CD8-positive, alpha-beta T cell (primary cell): ENCODE measurements at regions of chr12 and their contacts with region 1.

Region 1: DNA sequence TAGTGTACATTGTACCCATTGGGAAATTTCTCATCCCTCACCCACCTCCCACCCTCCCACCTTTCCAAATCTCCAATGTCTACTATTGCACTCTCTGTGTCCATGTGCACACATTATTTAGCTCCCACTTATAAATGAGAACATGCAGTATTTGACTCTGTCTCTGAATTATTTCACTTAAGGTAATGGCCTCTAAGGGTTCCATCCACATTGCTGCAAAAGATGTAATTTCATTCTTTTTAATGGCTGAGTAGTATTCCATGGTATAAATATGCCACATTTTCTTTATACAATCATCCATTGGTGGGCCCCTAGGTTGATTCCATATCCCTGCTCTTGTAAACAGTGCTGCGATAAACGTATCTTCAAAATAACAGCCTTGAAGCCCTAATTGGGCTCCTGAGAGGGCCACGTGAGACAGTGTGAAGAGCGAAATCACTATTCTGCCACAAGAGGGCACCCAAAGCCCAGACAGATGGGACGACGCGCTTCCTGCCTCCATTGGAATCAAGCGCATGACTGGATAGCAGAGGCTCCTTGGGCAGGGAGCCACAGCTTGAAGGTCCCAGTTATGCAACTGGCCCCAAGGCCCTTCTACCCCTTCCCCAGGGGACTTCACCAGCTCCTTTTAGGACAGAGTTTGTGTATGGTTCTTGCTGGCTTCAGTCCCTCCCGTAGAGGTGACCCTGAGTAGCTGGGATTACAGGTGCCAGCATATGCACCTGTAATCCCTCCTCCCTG is 21.3 kb upstream of the CD27 start:
- DNase-seq: peak; percentile 53 to 94 (median 74)
- ATAC-seq: peak; percentile 63
- H3K4me3 ChIP-seq: no peak overlapping the region
- H3K4me3 Mint-ChIP-seq: no peak overlapping the region
- H3K27ac ChIP-seq: peak overlapping the region in 1 of 2 experiments; percentile 37
- H3K27ac Mint-ChIP-seq: peak overlapping the region; percentile 65
- H3K4me1 ChIP-seq: peaks cover 40% of the 10 kb centered on the region
- H3K4me1 Mint-ChIP-seq: peaks cover 41% of the 10 kb centered on the region
- H3K27me3 ChIP-seq: no peaks in the 10 kb centered on the region
- H3K27me3 Mint-ChIP-seq: no peaks in the 10 kb centered on the region
- CTCF ChIP-seq: peak; percentile 74

Region 2: GRCh38 chr12:6167327-6168259 is 255.8 kb before region 1 on chr12:
- CTCF ChIA-PET with region 1: no interaction called
- POLR2A ChIA-PET with region 1: no interaction called
- intact Hi-C with region 1: no loop called
- DNase-seq: peak in 8 of 9 experiments; percentile 12 to 58 (median 40)
- ATAC-seq: peak; percentile 60
- H3K4me3 ChIP-seq: no peak overlapping the region
- H3K4me3 Mint-ChIP-seq: peak overlapping the region; percentile 27
- H3K27ac ChIP-seq: peak overlapping the region in 1 of 2 experiments; percentile 31
- H3K27ac Mint-ChIP-seq: peak overlapping the region; percentile 16
- H3K4me1 ChIP-seq: peaks cover 28% of the 10 kb centered on the region
- H3K4me1 Mint-ChIP-seq: peaks cover 35% of the 10 kb centered on the region
- H3K27me3 ChIP-seq: no peaks in the 10 kb centered on the region
- H3K27me3 Mint-ChIP-seq: peaks cover 2% of the 10 kb centered on the region
- CTCF ChIP-seq: no peak

Region 3: DNA sequence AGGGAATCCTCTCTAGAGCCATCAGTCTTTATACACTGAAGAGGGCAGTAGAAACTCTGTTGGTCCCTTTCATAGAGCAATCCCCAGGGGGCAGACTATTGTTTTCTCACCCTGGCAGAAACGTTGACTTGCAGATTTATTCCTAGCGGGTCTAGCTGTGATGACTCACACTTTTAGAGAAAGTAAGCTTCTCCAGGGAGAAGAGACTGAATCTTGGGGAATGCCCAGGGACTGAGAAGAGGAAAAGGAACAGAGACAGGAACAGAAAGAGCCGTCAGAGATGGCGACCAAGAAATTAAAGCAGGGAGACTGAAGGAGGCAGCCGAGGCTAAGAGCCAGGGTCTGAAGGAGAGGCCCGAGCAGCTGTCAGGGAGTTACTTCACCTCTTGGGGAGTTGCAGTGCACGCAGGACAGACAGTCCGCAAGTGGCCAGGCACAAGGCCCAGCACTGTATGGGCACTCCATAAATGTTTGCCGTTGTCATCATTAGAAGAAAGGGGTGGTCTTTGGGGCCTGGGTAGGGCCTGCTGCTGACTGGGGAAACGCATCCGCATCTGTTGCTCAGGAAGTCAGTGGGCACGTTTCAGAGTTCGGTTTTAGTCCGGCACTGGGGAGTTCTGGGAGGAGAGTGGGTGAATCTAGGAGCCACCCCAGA is 100.0 kb before region 1 on chr12:
- CTCF ChIA-PET with region 1: interaction called, 13 read pairs
- POLR2A ChIA-PET with region 1: no interaction called
- intact Hi-C with region 1: loop called in 1 of 2 experiments (anchors 1 kb)
- DNase-seq: peak in 6 of 9 experiments; percentile 40 to 83 (median 59)
- ATAC-seq: peak; percentile 85
- H3K4me3 ChIP-seq: peak overlapping the region; percentile 12 to 19
- H3K4me3 Mint-ChIP-seq: peak overlapping the region; percentile 80
- H3K27ac ChIP-seq: peak overlapping the region in 1 of 2 experiments; percentile 54
- H3K27ac Mint-ChIP-seq: peak overlapping the region; percentile 93
- H3K4me1 ChIP-seq: peaks cover 47% of the 10 kb centered on the region
- H3K4me1 Mint-ChIP-seq: peaks cover 63% of the 10 kb centered on the region
- H3K27me3 ChIP-seq: no peaks in the 10 kb centered on the region
- H3K27me3 Mint-ChIP-seq: no peaks in the 10 kb centered on the region
- CTCF ChIP-seq: peak; percentile 82

Region 4: GRCh38 chr12:6407236-6407954 is 16.0 kb before region 1 on chr12:
- CTCF ChIA-PET with region 1: no interaction called
- POLR2A ChIA-PET with region 1: no interaction called
- intact Hi-C with region 1: no loop called
- DNase-seq: no peak
- ATAC-seq: no peak
- H3K4me3 ChIP-seq: no peak overlapping the region
- H3K4me3 Mint-ChIP-seq: no peak overlapping the region
- H3K27ac ChIP-seq: no peak overlapping the region
- H3K27ac Mint-ChIP-seq: no peak overlapping the region
- H3K4me1 ChIP-seq: no peaks in the 10 kb centered on the region
- H3K4me1 Mint-ChIP-seq: no peaks in the 10 kb centered on the region
- H3K27me3 ChIP-seq: no peaks in the 10 kb centered on the region
- H3K27me3 Mint-ChIP-seq: peaks cover 2% of the 10 kb centered on the region
- CTCF ChIP-seq: no peak

Region 5: DNA sequence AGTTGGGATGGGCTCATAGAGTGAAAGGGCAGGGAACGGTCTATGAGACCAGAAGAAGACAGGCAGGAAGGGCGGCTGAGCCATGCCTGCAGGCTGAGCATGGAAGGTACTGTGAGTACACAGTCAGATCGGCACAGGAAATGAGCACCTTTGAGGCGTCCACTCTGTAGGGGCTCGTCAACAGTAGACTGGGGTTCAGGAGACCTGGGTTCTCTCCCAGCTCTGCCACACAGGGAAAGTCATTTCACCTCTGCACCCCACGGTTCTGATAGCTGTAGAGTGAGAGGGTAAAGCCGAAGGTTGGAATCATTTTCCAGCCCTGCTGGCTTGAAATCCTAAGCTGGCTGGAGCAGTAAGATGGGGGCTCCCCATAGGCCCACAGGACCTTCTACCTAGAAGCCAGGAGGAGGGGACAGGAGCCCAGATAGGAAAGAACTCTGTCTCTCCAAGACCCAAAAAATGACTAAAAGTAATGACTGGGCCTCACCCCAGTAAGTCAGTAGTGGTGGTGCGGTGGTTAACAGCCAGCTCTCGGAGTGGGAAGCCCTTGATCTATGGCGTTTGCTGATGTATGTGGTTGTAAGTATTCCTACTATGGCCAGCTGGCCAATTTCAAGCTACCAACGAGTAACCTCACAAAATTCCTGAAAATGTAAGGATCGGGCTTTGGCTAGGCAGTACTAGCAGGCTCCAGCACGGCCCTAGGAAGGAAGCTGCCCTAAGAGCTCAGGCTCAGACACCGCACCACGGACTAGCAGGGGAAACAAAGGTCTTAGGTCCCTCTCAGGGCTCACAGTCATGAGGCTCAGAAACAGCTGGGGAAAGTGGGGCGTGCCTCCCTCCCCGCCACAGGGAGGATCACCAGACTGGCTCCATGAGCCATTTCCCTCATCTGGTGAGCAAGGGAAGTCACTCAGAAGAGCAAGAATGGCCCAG is 11.0 kb after region 1 on chr12:
- CTCF ChIA-PET with region 1: interaction called, 68 read pairs
- POLR2A ChIA-PET with region 1: interaction called, 4 read pairs
- intact Hi-C with region 1: loop called in 1 of 2 experiments (anchors 1 kb)
- DNase-seq: peak in 5 of 9 experiments; percentile 44 to 73 (median 57)
- ATAC-seq: peak; percentile 83
- H3K4me3 ChIP-seq: peak overlapping the region in 1 of 2 experiments; percentile 38
- H3K4me3 Mint-ChIP-seq: peak overlapping the region; percentile 66
- H3K27ac ChIP-seq: peak overlapping the region; percentile 31 to 74
- H3K27ac Mint-ChIP-seq: peak overlapping the region; percentile 93
- H3K4me1 ChIP-seq: peaks cover 33% of the 10 kb centered on the region
- H3K4me1 Mint-ChIP-seq: peaks cover 48% of the 10 kb centered on the region
- H3K27me3 ChIP-seq: no peaks in the 10 kb centered on the region
- H3K27me3 Mint-ChIP-seq: no peaks in the 10 kb centered on the region
- CTCF ChIP-seq: no peak

Region 6: DNA sequence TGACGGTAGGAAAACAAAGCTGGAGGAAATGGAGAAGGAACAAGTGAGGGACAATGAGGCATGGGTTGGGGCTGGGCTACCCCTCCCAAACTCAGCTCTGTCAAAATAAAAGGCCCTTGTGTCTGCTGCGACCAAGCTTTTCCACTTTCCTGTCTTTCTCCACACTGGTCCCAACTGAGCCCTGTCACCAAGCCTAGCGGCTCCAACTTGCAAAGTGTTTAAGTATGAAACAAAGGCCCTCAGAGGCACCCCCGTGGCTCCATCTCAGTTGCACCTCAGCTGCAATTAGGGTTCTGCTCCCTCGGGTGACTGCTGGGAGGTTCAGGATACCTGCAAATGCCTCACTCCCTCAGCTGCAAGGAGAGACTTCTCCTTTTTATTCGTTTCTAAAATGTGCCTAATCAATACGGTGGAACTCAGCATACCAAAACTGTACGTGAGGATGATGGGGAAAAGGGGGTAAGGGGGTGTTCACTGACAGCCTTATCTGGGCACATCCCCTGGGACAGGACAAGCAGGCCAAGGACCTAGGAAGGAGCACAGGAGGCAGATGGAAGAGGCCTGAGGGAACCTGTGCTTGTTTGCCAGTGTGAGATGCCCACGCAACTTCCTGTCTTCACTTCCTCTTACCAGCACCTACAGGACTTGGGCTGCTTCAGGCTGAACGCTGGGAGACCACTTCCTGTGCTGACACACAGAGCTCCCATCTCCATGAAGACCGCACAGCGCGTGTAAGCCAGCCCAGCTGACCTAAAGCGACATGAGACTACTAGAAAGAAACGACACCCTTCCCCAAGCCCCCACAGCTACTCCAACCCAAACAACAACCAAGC is 38.2 kb after region 1 on chr12:
- CTCF ChIA-PET with region 1: interaction called, 284 read pairs
- POLR2A ChIA-PET with region 1: interaction called, 109 read pairs
- intact Hi-C with region 1: loop called (anchors 1 kb)
- DNase-seq: peak; percentile 58 to 97 (median 86)
- ATAC-seq: peak; percentile 77
- H3K4me3 ChIP-seq: peak overlapping the region; percentile 32 to 36
- H3K4me3 Mint-ChIP-seq: peak overlapping the region; percentile 78
- H3K27ac ChIP-seq: peak overlapping the region; percentile 84 to 96
- H3K27ac Mint-ChIP-seq: peak overlapping the region; percentile 99
- H3K4me1 ChIP-seq: peaks cover 87% of the 10 kb centered on the region
- H3K4me1 Mint-ChIP-seq: peaks cover 86% of the 10 kb centered on the region
- H3K27me3 ChIP-seq: no peaks in the 10 kb centered on the region
- H3K27me3 Mint-ChIP-seq: no peaks in the 10 kb centered on the region
- CTCF ChIP-seq: no peak

Region 7: GRCh38 chr12:6493497-6494257 is 70.2 kb after region 1 on chr12 and contains the start of gene NCAPD2:
- CTCF ChIA-PET with region 1: interaction called, 11 read pairs
- POLR2A ChIA-PET with region 1: interaction called, 4 read pairs
- intact Hi-C with region 1: loop called (anchors 1 to 2 kb)
- DNase-seq: peak; percentile 88 to 98 (median 94)
- ATAC-seq: peak; percentile 80
- H3K4me3 ChIP-seq: peak within 1 kb of the TSS; percentile 86 to 93
- H3K4me3 Mint-ChIP-seq: peak within 1 kb of the TSS; percentile 96
- H3K27ac ChIP-seq: peak within 1 kb of the TSS; percentile 72 to 93
- H3K27ac Mint-ChIP-seq: peak within 1 kb of the TSS; percentile 98
- H3K4me1 ChIP-seq: peaks cover 26% of the 10 kb centered on the region
- H3K4me1 Mint-ChIP-seq: peaks cover 41% of the 10 kb centered on the region
- H3K27me3 ChIP-seq: no peaks in the 10 kb centered on the region
- H3K27me3 Mint-ChIP-seq: no peaks in the 10 kb centered on the region
- CTCF ChIP-seq: no peak
- total RNA-seq, gene NCAPD2: 11.7 to 13.4 TPM

Region 8: DNA sequence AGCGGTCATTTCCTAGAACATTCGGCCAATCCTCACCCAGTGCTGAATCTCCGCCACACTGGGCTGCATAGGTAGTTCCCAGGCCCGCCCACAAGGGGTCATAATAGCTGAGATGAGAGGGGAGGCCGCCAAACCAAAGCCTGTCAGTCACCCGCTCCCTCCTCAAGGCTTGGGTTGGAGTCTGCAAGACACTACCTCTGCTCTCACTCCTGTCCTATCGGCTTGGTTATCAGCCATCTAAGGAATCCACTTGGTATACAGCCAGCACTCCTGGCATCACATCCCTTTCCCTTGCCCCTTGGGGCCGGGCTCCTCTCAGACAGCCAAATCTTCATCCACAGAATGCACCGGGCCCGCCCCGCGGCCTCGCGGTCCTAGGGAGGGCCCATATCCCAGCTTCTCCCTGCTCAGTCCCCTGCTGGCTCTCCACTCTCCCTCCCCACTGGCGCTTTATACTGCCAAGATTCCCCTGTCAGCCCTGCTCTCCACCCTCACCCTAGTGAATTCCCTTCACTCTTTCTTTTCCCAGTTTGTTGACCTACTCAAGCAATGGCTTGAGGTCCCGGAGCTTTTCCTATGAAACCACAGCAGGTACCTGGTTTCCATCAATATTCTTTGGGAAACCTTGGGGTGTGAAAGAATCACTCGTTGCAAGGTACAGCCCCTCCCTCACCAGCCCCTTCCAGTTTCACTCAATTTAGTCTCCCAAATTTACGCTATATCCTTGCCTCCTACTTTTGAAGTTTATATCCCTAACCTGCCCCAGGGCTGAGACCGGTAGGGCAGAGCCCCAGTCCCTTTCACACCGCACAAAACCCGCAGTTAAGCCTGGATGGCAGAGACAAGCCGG is 131.0 kb after region 1 on chr12:
- CTCF ChIA-PET with region 1: interaction called, 6 read pairs
- POLR2A ChIA-PET with region 1: interaction called, 3 read pairs
- intact Hi-C with region 1: loop called in 1 of 2 experiments (anchors 5 kb)
- DNase-seq: peak; percentile 55 to 81 (median 71)
- ATAC-seq: peak; percentile 61
- H3K4me3 ChIP-seq: peak overlapping the region; percentile 70 to 96
- H3K4me3 Mint-ChIP-seq: peak overlapping the region; percentile 87
- H3K27ac ChIP-seq: no peak overlapping the region
- H3K27ac Mint-ChIP-seq: peak overlapping the region; percentile 58
- H3K4me1 ChIP-seq: peaks cover 35% of the 10 kb centered on the region
- H3K4me1 Mint-ChIP-seq: peaks cover 49% of the 10 kb centered on the region
- H3K27me3 ChIP-seq: no peaks in the 10 kb centered on the region
- H3K27me3 Mint-ChIP-seq: no peaks in the 10 kb centered on the region
- CTCF ChIP-seq: peak; percentile 50